ENCODE measurements at regions of chr2 and their contacts with region 1.

Region 1: DNA sequence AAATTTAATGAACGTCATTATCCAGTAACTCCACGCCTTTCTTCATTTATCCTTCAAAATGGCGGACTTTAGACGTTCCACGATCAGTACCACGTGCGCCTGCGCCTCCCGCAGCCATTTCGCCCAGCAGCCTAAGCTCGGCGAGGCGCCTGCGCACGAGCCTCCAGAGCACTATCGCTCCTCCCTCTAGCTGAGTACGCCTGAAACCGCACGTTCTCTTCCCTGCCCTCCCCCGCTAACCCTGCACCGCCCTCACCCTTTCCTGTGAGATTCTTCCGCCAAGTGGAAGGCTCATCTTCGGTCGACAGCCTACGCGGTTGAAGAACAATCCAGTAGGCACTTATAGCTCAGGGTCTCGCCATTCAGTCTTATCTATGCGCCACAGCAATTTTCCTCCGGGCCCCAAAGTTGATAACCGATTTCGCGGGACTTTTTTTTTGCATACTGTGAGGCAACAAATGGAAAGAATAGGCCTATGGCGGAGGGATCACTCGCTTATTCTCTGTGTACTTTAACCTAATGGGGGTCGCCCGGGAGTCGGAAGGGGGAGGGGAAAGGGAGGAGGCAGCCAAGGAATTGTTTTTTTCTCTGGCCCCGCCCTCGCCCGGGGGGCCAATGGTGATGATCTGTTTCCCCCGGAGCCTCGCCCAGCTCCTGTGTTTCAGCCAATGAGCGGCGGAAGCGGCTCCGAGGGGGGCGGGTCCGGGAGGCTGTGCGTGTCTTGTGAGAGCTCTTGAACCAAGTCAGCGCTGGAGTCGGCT is at the start of gene KDM3A:
- DNase-seq: peak; percentile 99 to 100 (median 100)
- ATAC-seq: peak; percentile 93
- H3K4me3 ChIP-seq: peak within 1 kb of the TSS; percentile 62
- H3K4me1 ChIP-seq: peaks cover 18% of the 10 kb centered on the region
- CTCF ChIP-seq: no peak
- total RNA-seq, gene KDM3A: 36.1 to 73.6 (median 53.6) TPM

Region 2: GRCh38 chr2:86290596-86291327 is 150.0 kb before region 1 on chr2:
- intact Hi-C with region 1: no loop called
- DNase-seq: no peak
- ATAC-seq: no peak
- H3K4me3 ChIP-seq: no peak overlapping the region
- H3K4me1 ChIP-seq: peaks cover 13% of the 10 kb centered on the region
- CTCF ChIP-seq: no peak

Region 3: DNA sequence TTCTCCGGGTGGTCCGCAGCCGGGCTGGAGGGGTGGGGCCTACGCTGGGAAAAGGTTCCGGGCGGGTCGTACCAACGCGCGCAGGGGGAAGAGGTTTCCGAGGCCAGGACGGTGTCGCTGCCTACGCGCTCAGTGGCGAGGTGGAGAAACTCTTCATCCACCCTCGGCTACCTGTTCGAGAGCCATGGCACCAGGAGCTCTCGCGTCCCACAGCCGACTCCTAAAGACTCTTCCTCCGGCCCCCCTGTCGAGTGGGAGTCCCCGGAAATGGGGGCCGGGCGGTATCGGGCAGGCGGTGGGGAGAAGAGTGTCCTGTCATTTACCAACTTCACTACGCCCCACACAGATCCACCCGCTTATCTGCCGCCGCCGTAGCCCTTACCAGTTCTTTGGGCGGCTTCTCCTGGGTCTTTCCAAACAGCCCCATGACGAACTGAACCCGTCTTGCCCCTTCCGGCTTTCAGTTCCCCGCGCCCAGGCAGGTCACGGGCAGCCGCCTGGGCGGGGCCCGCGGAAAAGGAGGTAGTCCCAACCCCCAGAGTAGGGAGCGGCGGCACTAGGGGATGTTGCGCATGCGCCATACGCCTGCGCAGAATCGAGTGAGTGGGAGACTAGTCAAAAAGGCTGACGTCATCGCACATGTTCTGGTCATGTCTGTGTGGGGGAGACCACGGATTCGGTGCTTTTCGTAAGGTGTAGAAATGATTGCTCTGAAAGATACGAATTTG is 122.3 kb after region 1 on chr2 and contains the start of gene CHMP3:
- intact Hi-C with region 1: loop called in 1 of 2 experiments (anchors 10 kb)
- DNase-seq: peak; percentile 96 to 98 (median 97)
- ATAC-seq: peak; percentile 98
- H3K4me3 ChIP-seq: peak within 1 kb of the TSS; percentile 71
- H3K4me1 ChIP-seq: peaks cover 13% of the 10 kb centered on the region
- CTCF ChIP-seq: no peak
- total RNA-seq, gene CHMP3: 149 to 203 (median 196) TPM

Measured in mucosa of descending colon (tissue), 3 donors.